Common myeloid progenitor, CD34-positive (primary cell): ENCODE measurements at regions of chr22 and their contacts with region 1.

Region 1: GRCh38 chr22:41800348-41801146 is at the start of gene CCDC134:
- DNase-seq: peak; percentile 92 to 98 (median 98)
- H3K4me3 ChIP-seq: peak within 1 kb of the TSS; percentile 73 to 98 (median 90)
- H3K27ac ChIP-seq: peak within 1 kb of the TSS; percentile 78 to 90
- H3K4me1 ChIP-seq: peaks cover 3 to 32% (median 26%) of the 10 kb centered on the region in 4 experiments
- H3K27me3 ChIP-seq: no peaks in the 10 kb centered on the region

Region 2: DNA sequence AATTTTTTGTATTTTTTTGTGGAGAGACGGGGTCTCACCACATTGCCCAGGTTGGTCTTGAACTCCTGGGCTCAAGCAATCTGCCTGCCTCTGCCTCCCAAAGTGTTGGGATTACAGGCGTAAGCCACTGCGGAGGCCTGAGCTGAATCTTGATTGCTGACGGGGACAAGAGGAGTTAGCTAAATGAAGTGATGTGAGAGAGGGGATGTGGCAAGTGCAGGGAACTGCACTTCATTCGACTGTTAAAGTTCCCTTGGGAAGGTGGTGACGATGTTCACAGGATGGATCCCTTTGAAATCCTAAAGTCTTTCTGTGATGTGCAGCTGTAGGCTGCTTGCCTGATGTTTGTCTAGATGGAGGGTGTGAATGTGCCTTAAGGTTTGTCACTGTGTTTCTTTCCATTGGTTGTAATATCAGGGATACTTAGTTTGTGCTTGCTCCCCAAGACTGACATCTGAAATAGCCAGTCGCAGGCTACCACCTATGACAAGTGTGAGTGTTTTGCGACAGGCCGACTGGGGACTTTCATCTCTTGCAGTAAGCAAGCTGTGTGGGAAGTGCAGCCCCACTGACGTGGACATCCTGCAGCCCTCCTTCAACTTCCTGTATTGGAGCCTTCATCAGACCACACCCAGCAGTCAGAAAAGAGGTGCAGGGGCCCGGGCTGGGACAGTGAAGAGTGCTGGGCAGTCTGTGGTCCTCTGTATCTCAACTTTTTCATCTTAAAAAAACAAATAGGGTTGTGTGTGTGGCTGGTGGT is 19.6 kb before region 1 on chr22:
- CTCF ChIA-PET with region 1: interaction called, 55 read pairs
- POLR2A ChIA-PET with region 1: interaction called, 14 read pairs
- DNase-seq: peak; percentile 96 to 100 (median 99)
- H3K4me3 ChIP-seq: peak overlapping the region in 5 of 7 experiments; percentile 40 to 67 (median 47)
- H3K27ac ChIP-seq: peak overlapping the region; percentile 14 to 76
- H3K4me1 ChIP-seq: peaks cover 12 to 27% (median 19%) of the 10 kb centered on the region in 4 experiments
- H3K27me3 ChIP-seq: no peaks in the 10 kb centered on the region

Region 3: GRCh38 chr22:41816181-41816621 is 15.7 kb after region 1 on chr22:
- CTCF ChIA-PET with region 1: interaction called, 10 read pairs
- POLR2A ChIA-PET with region 1: no interaction called
- DNase-seq: no peak
- H3K4me3 ChIP-seq: no peak overlapping the region
- H3K27ac ChIP-seq: no peak overlapping the region
- H3K4me1 ChIP-seq: no peaks in the 10 kb centered on the region
- H3K27me3 ChIP-seq: no peaks in the 10 kb centered on the region